Natural killer cell (primary cell): ENCODE measurements at regions of chr17 and their contacts with region 1.

Region 1: GRCh38 chr17:38752119-38752929 is at the start of gene PSMB3:
- DNase-seq: peak; percentile 83 to 99
- ATAC-seq: peak; percentile 84 to 96 (median 89)
- H3K4me3 ChIP-seq: peak within 1 kb of the TSS; percentile 80
- H3K4me3 Mint-ChIP-seq: peak within 1 kb of the TSS; percentile 96
- H3K27ac ChIP-seq: peak within 1 kb of the TSS; percentile 86
- H3K27ac Mint-ChIP-seq: peak within 1 kb of the TSS; percentile 85 to 86
- H3K4me1 ChIP-seq: peaks cover 60% of the 10 kb centered on the region
- H3K4me1 Mint-ChIP-seq: peaks cover 52 to 54% of the 10 kb centered on the region in 2 donors
- H3K27me3 ChIP-seq: peaks cover 28% of the 10 kb centered on the region
- H3K27me3 Mint-ChIP-seq: peaks cover 23 to 28% of the 10 kb centered on the region in 2 donors
- CTCF ChIP-seq: no peak
- total RNA-seq, gene PSMB3: 102 to 129 (median 118) TPM

Region 2: GRCh38 chr17:38557836-38558727 is 194.2 kb before region 1 on chr17:
- intact Hi-C with region 1: loop called (anchors 5 kb)
- DNase-seq: peak; percentile 85 to 95
- ATAC-seq: peak; percentile 81 to 85 (median 84)
- H3K4me3 ChIP-seq: peak overlapping the region; percentile 55
- H3K4me3 Mint-ChIP-seq: peak overlapping the region; percentile 98
- H3K27ac ChIP-seq: no peak overlapping the region
- H3K27ac Mint-ChIP-seq: peak overlapping the region; percentile 78 to 79
- H3K4me1 ChIP-seq: peaks cover 44% of the 10 kb centered on the region
- H3K4me1 Mint-ChIP-seq: peaks cover 17 to 28% of the 10 kb centered on the region in 2 donors
- H3K27me3 ChIP-seq: peaks cover 24% of the 10 kb centered on the region
- H3K27me3 Mint-ChIP-seq: peaks cover 26 to 39% of the 10 kb centered on the region in 2 donors
- CTCF ChIP-seq: peak; percentile 84

Region 3: DNA sequence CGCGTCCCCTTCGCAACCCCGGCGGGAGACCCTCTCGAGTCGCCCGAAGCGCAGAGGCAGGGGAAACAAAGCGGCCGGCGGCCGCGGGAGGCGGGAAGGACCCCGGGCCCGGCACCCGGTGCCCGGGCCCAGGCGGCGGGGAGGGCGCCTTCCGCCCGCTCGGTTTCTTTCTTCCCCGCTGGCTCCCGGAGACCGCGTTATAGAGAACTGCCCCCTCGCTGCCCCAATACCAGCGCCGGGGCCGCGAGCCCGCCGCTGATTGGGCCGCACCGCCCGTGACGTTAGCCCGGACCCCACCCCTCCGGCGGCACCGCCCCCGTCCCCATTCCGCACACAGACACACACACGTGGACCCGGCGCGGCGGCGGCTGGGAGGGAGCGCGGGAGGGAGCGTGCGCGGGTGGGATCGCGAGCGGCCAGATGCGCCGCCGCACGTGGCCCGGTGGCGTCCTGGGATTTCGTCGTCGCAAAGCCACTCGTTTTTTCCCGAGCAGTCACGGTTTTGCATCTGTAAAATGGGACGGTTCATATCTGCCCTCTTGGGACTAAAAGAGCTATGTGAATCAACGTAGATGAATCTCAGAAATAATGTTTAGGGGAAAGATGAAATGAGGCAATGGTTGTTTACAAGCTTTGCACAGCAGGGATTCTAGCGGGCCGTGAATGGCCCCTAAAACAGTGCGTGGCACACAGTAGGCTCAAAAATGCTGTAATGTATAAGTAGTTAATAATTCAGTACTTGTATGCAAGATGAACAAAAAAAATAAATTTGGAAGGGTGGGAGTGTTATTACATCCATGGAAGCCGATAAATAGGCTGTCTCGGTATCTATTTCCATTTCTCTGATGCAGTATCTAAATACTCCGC is 77.3 kb before region 1 on chr17 and contains the start of gene EPOP:
- intact Hi-C with region 1: loop called (anchors 5 kb)
- DNase-seq: peak; percentile 71 to 90
- ATAC-seq: peak; percentile 83 to 90 (median 89)
- H3K4me3 ChIP-seq: peak within 1 kb of the TSS; percentile 32
- H3K4me3 Mint-ChIP-seq: peak within 1 kb of the TSS; percentile 79
- H3K27ac ChIP-seq: no peak within 1 kb of the TSS
- H3K27ac Mint-ChIP-seq: peak within 1 kb of the TSS in 1 of 2 donors; percentile 52
- H3K4me1 ChIP-seq: peaks cover 20% of the 10 kb centered on the region
- H3K4me1 Mint-ChIP-seq: peaks cover 11 to 23% of the 10 kb centered on the region in 2 donors
- H3K27me3 ChIP-seq: peaks cover 38% of the 10 kb centered on the region
- H3K27me3 Mint-ChIP-seq: peaks cover 17 to 21% of the 10 kb centered on the region in 2 donors
- CTCF ChIP-seq: no peak
- total RNA-seq, gene EPOP: 0.66 to 1.9 (median 1.1) TPM

Region 4: GRCh38 chr17:38702166-38702899 is 50.0 kb before region 1 on chr17:
- intact Hi-C with region 1: loop called (anchors 10 kb)
- DNase-seq: peak; percentile 76 to 89
- ATAC-seq: peak; percentile 17 to 66 (median 48)
- H3K4me3 ChIP-seq: peak overlapping the region; percentile 77
- H3K4me3 Mint-ChIP-seq: peak overlapping the region; percentile 98
- H3K27ac ChIP-seq: peak overlapping the region; percentile 95
- H3K27ac Mint-ChIP-seq: peak overlapping the region; percentile 98 to 100
- H3K4me1 ChIP-seq: peaks cover 57% of the 10 kb centered on the region
- H3K4me1 Mint-ChIP-seq: peaks cover 44 to 72% of the 10 kb centered on the region in 2 donors
- H3K27me3 ChIP-seq: no peaks in the 10 kb centered on the region
- H3K27me3 Mint-ChIP-seq: no peaks in the 10 kb centered on the region
- CTCF ChIP-seq: no peak

Region 5: GRCh38 chr17:38729886-38730525 is 22.3 kb before region 1 on chr17 and contains the start of gene CISD3:
- intact Hi-C with region 1: loop called (anchors 2 kb)
- DNase-seq: peak; percentile 88 to 95
- ATAC-seq: peak; percentile 68 to 89 (median 79)
- H3K4me3 ChIP-seq: peak within 1 kb of the TSS; percentile 69
- H3K4me3 Mint-ChIP-seq: peak within 1 kb of the TSS; percentile 95
- H3K27ac ChIP-seq: peak within 1 kb of the TSS; percentile 82
- H3K27ac Mint-ChIP-seq: peak within 1 kb of the TSS; percentile 98 to 99
- H3K4me1 ChIP-seq: peaks cover 83% of the 10 kb centered on the region
- H3K4me1 Mint-ChIP-seq: peaks cover 86 to 93% of the 10 kb centered on the region in 2 donors
- H3K27me3 ChIP-seq: no peaks in the 10 kb centered on the region
- H3K27me3 Mint-ChIP-seq: no peaks in the 10 kb centered on the region
- CTCF ChIP-seq: peak; percentile 59
- total RNA-seq, gene CISD3: 32.6 to 37.4 (median 33.9) TPM

Region 6: GRCh38 chr17:38824899-38825761 is 72.8 kb after region 1 on chr17 and contains the start of gene CWC25:
- intact Hi-C with region 1: loop called (anchors 1 kb)
- DNase-seq: peak; percentile 98 to 100
- ATAC-seq: peak; percentile 85 to 90 (median 85)
- H3K4me3 ChIP-seq: peak within 1 kb of the TSS; percentile 80
- H3K4me3 Mint-ChIP-seq: peak within 1 kb of the TSS; percentile 94
- H3K27ac ChIP-seq: peak within 1 kb of the TSS; percentile 89
- H3K27ac Mint-ChIP-seq: peak within 1 kb of the TSS; percentile 97 to 100
- H3K4me1 ChIP-seq: peaks cover 18% of the 10 kb centered on the region
- H3K4me1 Mint-ChIP-seq: peaks cover 27 to 39% of the 10 kb centered on the region in 2 donors
- H3K27me3 ChIP-seq: no peaks in the 10 kb centered on the region
- H3K27me3 Mint-ChIP-seq: no peaks in the 10 kb centered on the region
- CTCF ChIP-seq: no peak
- total RNA-seq, gene CWC25: 63.8 to 79.4 (median 74.4) TPM

Region 7: GRCh38 chr17:38883592-38884526 is 131.5 kb after region 1 on chr17:
- intact Hi-C with region 1: no loop called
- DNase-seq: peak in 1 of 2 donors; percentile 49
- ATAC-seq: no peak
- H3K4me3 ChIP-seq: no peak overlapping the region
- H3K4me3 Mint-ChIP-seq: peak overlapping the region; percentile 87
- H3K27ac ChIP-seq: peak overlapping the region; percentile 63
- H3K27ac Mint-ChIP-seq: peak overlapping the region; percentile 91 to 98
- H3K4me1 ChIP-seq: peaks cover 98% of the 10 kb centered on the region
- H3K4me1 Mint-ChIP-seq: peaks cover 86 to 87% of the 10 kb centered on the region in 2 donors
- H3K27me3 ChIP-seq: no peaks in the 10 kb centered on the region
- H3K27me3 Mint-ChIP-seq: no peaks in the 10 kb centered on the region
- CTCF ChIP-seq: no peak